Activated CD4-positive, alpha-beta T cell treated with anti-CD3 and anti-CD28 coated beads for 36 hours (primary cell): ENCODE measurements at regions of chr1 and their contacts with region 1.

Region 1: GRCh38 chr1:160877221-160877620 is 7.8 kb downstream of the ITLN1 start:
- DNase-seq: no peak
- ATAC-seq: peak; percentile 70
- H3K4me3 Mint-ChIP-seq: no peak overlapping the region
- H3K27ac Mint-ChIP-seq: no peak overlapping the region
- H3K4me1 Mint-ChIP-seq: peaks cover 24% of the 10 kb centered on the region
- H3K27me3 Mint-ChIP-seq: no peaks in the 10 kb centered on the region

Region 2: GRCh38 chr1:160862203-160863060 is 14.8 kb before region 1 on chr1 and contains the start of gene CD244:
- CTCF ChIA-PET with region 1: interaction called, 11 read pairs
- POLR2A ChIA-PET with region 1: no interaction called
- intact Hi-C with region 1: no loop called
- DNase-seq: peak; percentile 79
- ATAC-seq: peak; percentile 98
- H3K4me3 Mint-ChIP-seq: no peak within 1 kb of the TSS
- H3K27ac Mint-ChIP-seq: no peak within 1 kb of the TSS
- H3K4me1 Mint-ChIP-seq: peaks cover 19% of the 10 kb centered on the region
- H3K27me3 Mint-ChIP-seq: no peaks in the 10 kb centered on the region
- total RNA-seq, gene CD244: 0.14 to 0.25 TPM